CD8-positive, alpha-beta T cell (primary cell): ENCODE measurements at regions of chr4 and their contacts with region 1.

Region 1: DNA sequence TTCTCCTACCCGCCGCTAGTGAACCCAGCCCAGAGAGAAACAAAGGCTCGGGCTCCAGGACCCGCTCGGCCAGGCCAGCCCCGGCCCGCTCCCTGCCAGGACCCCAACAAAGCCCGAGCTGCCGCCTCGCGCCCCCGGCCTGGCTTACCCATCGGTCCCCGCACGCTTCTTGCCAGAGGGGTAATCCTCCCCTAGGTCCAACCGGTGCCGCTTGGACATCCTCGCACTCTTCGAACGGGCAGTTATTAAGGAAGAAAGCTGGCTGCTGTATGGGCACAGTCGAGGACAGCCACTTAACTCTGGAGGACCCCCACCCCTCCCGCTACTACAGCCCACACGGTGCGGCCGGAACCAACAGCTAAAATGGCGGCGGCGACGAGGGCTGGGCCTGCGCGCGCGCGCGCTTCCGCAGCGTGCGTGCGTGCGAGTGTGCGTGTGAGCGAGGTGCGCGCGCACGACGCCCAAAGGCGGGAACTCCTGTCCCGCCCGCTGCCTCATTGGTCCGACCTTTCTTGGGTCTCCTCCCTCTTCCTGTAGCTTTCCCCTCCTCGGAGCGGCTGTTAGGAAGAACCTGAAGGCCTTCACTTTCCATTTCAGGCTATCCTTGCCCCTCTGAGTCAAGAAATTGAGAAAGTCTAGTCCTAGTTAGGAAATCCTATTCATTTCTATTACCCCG is at the start of gene DHX15:
- DNase-seq: peak; percentile 81 to 98 (median 91)
- ATAC-seq: peak; percentile 94
- H3K4me3 ChIP-seq: peak within 1 kb of the TSS; percentile 81 to 97
- H3K4me3 Mint-ChIP-seq: peak within 1 kb of the TSS; percentile 98
- H3K27ac ChIP-seq: peak within 1 kb of the TSS; percentile 90 to 98
- H3K27ac Mint-ChIP-seq: peak within 1 kb of the TSS; percentile 98
- H3K4me1 ChIP-seq: peaks cover 18% of the 10 kb centered on the region
- H3K4me1 Mint-ChIP-seq: peaks cover 43% of the 10 kb centered on the region
- H3K27me3 ChIP-seq: no peaks in the 10 kb centered on the region
- H3K27me3 Mint-ChIP-seq: no peaks in the 10 kb centered on the region
- CTCF ChIP-seq: no peak
- total RNA-seq, gene DHX15: 211 to 221 TPM

Region 2: DNA sequence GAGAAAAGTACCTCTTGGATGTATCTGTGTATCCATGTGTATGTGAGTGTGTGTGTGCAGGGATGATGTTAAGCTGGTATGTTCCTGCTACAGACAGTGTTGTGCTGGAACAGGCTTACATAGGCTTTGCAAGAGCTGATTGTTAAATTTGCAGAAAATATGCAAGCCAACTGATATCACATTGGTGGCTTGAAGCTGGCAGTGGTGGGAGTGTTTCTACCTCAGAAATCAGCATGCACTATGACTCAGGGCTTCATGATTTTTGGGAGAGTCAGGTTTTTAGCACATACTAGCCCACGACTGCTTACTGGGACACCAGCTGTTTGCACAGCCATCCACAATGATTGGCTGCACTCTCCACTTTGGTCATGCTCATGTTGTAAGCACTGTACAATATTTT is 261.8 kb before region 1 on chr4:
- CTCF ChIA-PET with region 1: no interaction called
- POLR2A ChIA-PET with region 1: no interaction called
- intact Hi-C with region 1: no loop called
- DNase-seq: no peak
- ATAC-seq: no peak
- H3K4me3 ChIP-seq: no peak overlapping the region
- H3K4me3 Mint-ChIP-seq: no peak overlapping the region
- H3K27ac ChIP-seq: no peak overlapping the region
- H3K27ac Mint-ChIP-seq: no peak overlapping the region
- H3K4me1 ChIP-seq: no peaks in the 10 kb centered on the region
- H3K4me1 Mint-ChIP-seq: no peaks in the 10 kb centered on the region
- H3K27me3 ChIP-seq: no peaks in the 10 kb centered on the region
- H3K27me3 Mint-ChIP-seq: no peaks in the 10 kb centered on the region
- CTCF ChIP-seq: no peak

Region 3: DNA sequence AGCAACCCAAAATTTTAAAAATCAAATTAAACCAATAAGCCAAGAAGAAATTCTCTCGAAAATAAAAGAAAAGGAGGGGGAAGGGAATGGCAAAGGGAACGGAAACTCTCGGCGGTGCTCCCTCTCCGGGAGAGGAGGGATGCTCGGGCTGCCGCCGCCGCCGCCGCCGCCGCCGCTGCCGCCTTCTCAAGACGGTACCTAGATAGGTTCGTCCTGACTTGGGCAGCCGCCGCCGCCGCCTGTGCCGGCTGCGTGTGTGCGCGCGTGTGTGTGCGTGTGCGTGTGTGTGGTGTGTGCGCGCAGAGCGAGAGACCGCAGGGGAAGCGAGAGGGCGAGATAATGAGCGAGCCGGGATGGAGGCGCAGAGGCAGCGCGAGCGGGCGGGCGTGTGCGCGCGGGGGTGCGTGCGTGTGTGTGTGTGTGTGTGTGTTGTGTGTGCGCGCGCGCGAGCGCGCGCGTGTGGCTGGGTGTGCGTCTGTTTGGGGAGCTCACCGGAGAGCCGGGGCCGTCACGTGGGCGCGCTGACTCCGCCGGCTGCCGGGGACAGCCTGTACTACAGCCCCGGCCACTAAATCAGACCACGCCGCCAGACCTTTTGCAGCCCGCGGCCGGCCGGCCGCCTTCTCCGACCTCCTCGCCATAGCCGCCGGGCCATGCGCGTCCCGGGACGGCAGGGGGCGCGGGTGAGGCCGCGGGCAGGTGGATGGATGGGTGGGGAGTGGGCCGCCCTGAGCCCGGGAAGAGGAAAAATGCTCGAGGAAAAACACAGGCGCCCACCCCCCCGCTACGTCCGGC is 111.6 kb before region 1 on chr4:
- CTCF ChIA-PET with region 1: no interaction called
- POLR2A ChIA-PET with region 1: no interaction called
- intact Hi-C with region 1: loop called (anchors 2 to 5 kb)
- DNase-seq: peak; percentile 9 to 81 (median 46)
- ATAC-seq: peak; percentile 70
- H3K4me3 ChIP-seq: peak overlapping the region; percentile 43 to 47
- H3K4me3 Mint-ChIP-seq: peak overlapping the region; percentile 94
- H3K27ac ChIP-seq: no peak overlapping the region
- H3K27ac Mint-ChIP-seq: peak overlapping the region; percentile 81
- H3K4me1 ChIP-seq: peaks cover 14% of the 10 kb centered on the region
- H3K4me1 Mint-ChIP-seq: peaks cover 33% of the 10 kb centered on the region
- H3K27me3 ChIP-seq: peaks cover 2 to 13% of the 10 kb centered on the region in 2 experiments
- H3K27me3 Mint-ChIP-seq: peaks cover 64% of the 10 kb centered on the region
- CTCF ChIP-seq: peak; percentile 19

Region 4: GRCh38 chr4:24544208-24544988 is 39.9 kb before region 1 on chr4:
- CTCF ChIA-PET with region 1: no interaction called
- POLR2A ChIA-PET with region 1: no interaction called
- intact Hi-C with region 1: loop called in 1 of 2 experiments (anchors 5 kb)
- DNase-seq: no peak
- ATAC-seq: no peak
- H3K4me3 ChIP-seq: no peak overlapping the region
- H3K4me3 Mint-ChIP-seq: no peak overlapping the region
- H3K27ac ChIP-seq: no peak overlapping the region
- H3K27ac Mint-ChIP-seq: peak overlapping the region; percentile 49
- H3K4me1 ChIP-seq: peaks cover 7% of the 10 kb centered on the region
- H3K4me1 Mint-ChIP-seq: peaks cover 60% of the 10 kb centered on the region
- H3K27me3 ChIP-seq: no peaks in the 10 kb centered on the region
- H3K27me3 Mint-ChIP-seq: no peaks in the 10 kb centered on the region
- CTCF ChIP-seq: no peak

Region 5: GRCh38 chr4:25913851-25914669 is 1329.7 kb after region 1 on chr4 and contains the start of gene SMIM20:
- CTCF ChIA-PET with region 1: no interaction called
- POLR2A ChIA-PET with region 1: no interaction called
- intact Hi-C with region 1: loop called in 1 of 2 experiments (anchors 5 kb)
- DNase-seq: peak; percentile 81 to 95 (median 87)
- ATAC-seq: peak; percentile 94
- H3K4me3 ChIP-seq: peak within 1 kb of the TSS; percentile 72 to 78
- H3K4me3 Mint-ChIP-seq: peak within 1 kb of the TSS; percentile 97
- H3K27ac ChIP-seq: peak within 1 kb of the TSS; percentile 81 to 95
- H3K27ac Mint-ChIP-seq: peak within 1 kb of the TSS; percentile 98
- H3K4me1 ChIP-seq: peaks cover 18% of the 10 kb centered on the region
- H3K4me1 Mint-ChIP-seq: peaks cover 24% of the 10 kb centered on the region
- H3K27me3 ChIP-seq: no peaks in the 10 kb centered on the region
- H3K27me3 Mint-ChIP-seq: no peaks in the 10 kb centered on the region
- CTCF ChIP-seq: no peak
- total RNA-seq, gene SMIM20: 7.5 to 9.8 TPM

Region 6: GRCh38 chr4:25953740-25954139 is 1369.4 kb after region 1 on chr4:
- CTCF ChIA-PET with region 1: no interaction called
- POLR2A ChIA-PET with region 1: no interaction called
- intact Hi-C with region 1: no loop called
- DNase-seq: no peak
- ATAC-seq: no peak
- H3K4me3 ChIP-seq: no peak overlapping the region
- H3K4me3 Mint-ChIP-seq: no peak overlapping the region
- H3K27ac ChIP-seq: no peak overlapping the region
- H3K27ac Mint-ChIP-seq: no peak overlapping the region
- H3K4me1 ChIP-seq: peaks cover 6% of the 10 kb centered on the region
- H3K4me1 Mint-ChIP-seq: peaks cover 5% of the 10 kb centered on the region
- H3K27me3 ChIP-seq: peaks cover 2 to 4% of the 10 kb centered on the region in 2 experiments
- H3K27me3 Mint-ChIP-seq: peaks cover 40% of the 10 kb centered on the region
- CTCF ChIP-seq: no peak